HepG2 (cell line): ENCODE measurements at regions of chr11 and their contacts with region 1.

Region 1: GRCh38 chr11:66119348-66120133 is 49.5 kb downstream of the PACS1 start:
- DNase-seq: peak; percentile 95
- ATAC-seq: peak; percentile 93
- H3K4me3 ChIP-seq: peak overlapping the region; percentile 0 to 53 (median 29); a peak in 2 of 6 replicates
- H3K27ac ChIP-seq: peak overlapping the region; percentile 90
- H3K4me1 ChIP-seq: peaks cover 63% of the 10 kb centered on the region
- H3K27me3 ChIP-seq: no peaks in the 10 kb centered on the region
- CTCF ChIP-seq: no peak
- EP300 ChIP-seq: 0 out of 4 replicates have a peak, but pooled peaks of 1 of the 2 experiments have one; percentile 11
- POLR2A ChIP-seq: peak in 1 of 2 experiments; percentile 69; a peak in 2 of 4 replicates
- RAD21 ChIP-seq: no peak

Region 2: GRCh38 chr11:66051766-66052663 is 67.5 kb before region 1 on chr11 and contains the start of gene SF3B2:
- CTCF ChIA-PET with region 1: no interaction called
- POLR2A ChIA-PET with region 1: interaction called, 14 read pairs
- in situ Hi-C with region 1: no loop called
- intact Hi-C with region 1: no loop called
- DNase-seq: peak; percentile 95
- ATAC-seq: peak; percentile 96
- H3K4me3 ChIP-seq: peak within 1 kb of the TSS; percentile 83 to 93 (median 93)
- H3K27ac ChIP-seq: peak within 1 kb of the TSS; percentile 79
- H3K4me1 ChIP-seq: peaks cover 40% of the 10 kb centered on the region
- H3K27me3 ChIP-seq: peaks cover 0 to 23% of the 10 kb centered on the region in 2 experiments; a peak in 3 of 5 replicates
- CTCF ChIP-seq: peak; percentile 24; the same call in 1 of the 2 replicates
- EP300 ChIP-seq: no peak
- POLR2A ChIP-seq: peak; percentile 76 to 82
- RAD21 ChIP-seq: 0 out of 2 replicates have a peak, but pooled peaks have one; percentile 20
- total RNA-seq, gene SF3B2: 153 and 162 TPM in 2 replicates

Region 3: DNA sequence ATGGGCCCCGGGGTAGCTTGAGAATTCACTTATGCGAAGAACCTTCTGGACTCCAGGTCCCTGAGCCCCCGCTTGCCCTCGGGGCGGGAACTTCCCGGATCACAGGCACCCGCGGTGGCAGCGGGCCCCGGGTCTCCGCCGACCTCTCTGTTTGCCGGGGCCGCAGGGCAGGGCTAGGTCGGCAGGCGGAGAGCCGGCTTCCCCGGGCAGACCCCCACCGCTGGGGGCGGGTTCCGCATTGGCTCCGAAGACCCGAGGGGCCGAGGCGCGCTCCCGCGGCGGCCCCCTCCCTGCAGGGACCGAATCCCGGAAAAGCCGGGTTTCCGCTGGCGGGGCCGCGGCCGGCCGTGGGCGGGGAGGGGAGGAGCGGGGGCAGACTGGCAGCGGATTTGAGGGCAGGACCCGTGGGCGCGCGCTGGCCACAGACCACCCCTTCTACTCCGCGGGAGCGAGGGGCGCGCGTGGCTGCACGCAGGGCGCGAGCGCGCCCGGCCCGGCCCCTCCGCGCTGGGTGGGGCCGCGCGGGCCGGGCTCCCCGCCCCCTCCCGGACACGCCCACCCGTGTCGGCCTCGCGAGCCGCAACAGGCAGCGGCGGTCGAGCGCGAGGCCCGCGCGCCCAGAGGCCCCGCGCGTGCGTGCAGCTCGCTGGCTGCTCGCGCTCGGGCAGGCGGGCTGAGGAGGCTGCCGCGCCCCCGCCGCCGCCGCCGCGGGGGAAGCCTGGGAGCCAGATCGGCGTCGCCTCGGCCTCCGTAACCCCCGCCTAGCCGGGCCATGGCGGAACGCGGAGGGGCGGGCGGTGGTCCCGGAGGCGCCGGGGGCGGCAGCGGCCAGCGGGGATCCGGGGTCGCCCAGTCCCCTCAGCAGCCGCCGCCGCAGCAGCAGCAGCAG is 49.6 kb before region 1 on chr11 and contains the start of gene PACS1:
- CTCF ChIA-PET with region 1: no interaction called
- POLR2A ChIA-PET with region 1: interaction called, 5 read pairs
- in situ Hi-C with region 1: no loop called
- intact Hi-C with region 1: loop called (anchors 5 kb)
- DNase-seq: peak; percentile 25
- ATAC-seq: peak; percentile 48
- H3K4me3 ChIP-seq: peak within 1 kb of the TSS; percentile 82 to 88 (median 86)
- H3K27ac ChIP-seq: peak within 1 kb of the TSS; percentile 59
- H3K4me1 ChIP-seq: peaks cover 59% of the 10 kb centered on the region
- H3K27me3 ChIP-seq: no peaks in the 10 kb centered on the region
- CTCF ChIP-seq: no peak
- EP300 ChIP-seq: no peak
- POLR2A ChIP-seq: peak in 1 of 2 experiments; percentile 46; a peak in 1 of 4 replicates
- RAD21 ChIP-seq: no peak; the same call in none of the 2 replicates
- total RNA-seq, gene PACS1: 7.6 and 12.2 TPM in 2 replicates

Region 4: GRCh38 chr11:66087148-66087908 is 32.2 kb before region 1 on chr11:
- CTCF ChIA-PET with region 1: no interaction called
- POLR2A ChIA-PET with region 1: interaction called, 4 read pairs
- in situ Hi-C with region 1: no loop called
- intact Hi-C with region 1: loop called (anchors 1 kb)
- DNase-seq: no peak
- ATAC-seq: peak; percentile 79
- H3K4me3 ChIP-seq: no peak overlapping the region
- H3K27ac ChIP-seq: peak overlapping the region; percentile 47
- H3K4me1 ChIP-seq: peaks cover 46% of the 10 kb centered on the region
- H3K27me3 ChIP-seq: no peaks in the 10 kb centered on the region
- CTCF ChIP-seq: no peak
- EP300 ChIP-seq: no peak
- POLR2A ChIP-seq: no peak
- RAD21 ChIP-seq: no peak

Region 5: DNA sequence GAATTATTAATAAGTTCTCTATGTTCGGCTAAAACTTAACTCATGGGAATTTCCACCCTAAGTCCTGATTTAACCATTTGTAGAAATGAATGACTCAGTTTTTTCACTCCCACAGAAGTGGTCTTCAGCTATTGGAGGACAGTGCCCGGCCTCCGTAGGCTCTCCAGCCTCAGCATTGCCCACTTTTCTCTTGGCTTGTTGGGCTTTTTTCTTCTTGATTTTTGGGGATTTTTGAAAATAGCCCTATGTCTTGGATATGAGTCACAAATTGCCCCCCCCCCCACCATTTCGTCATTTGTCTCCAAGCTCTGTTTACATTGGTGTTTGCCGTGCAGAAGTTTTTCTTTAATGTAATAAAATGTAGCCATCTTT is 17.2 kb after region 1 on chr11:
- CTCF ChIA-PET with region 1: no interaction called
- POLR2A ChIA-PET with region 1: interaction called, 7 read pairs
- in situ Hi-C with region 1: no loop called
- intact Hi-C with region 1: loop called (anchors 1 kb)
- DNase-seq: peak; percentile 37
- ATAC-seq: no peak
- H3K4me3 ChIP-seq: no peak overlapping the region
- H3K27ac ChIP-seq: no peak overlapping the region
- H3K4me1 ChIP-seq: peaks cover 38% of the 10 kb centered on the region
- H3K27me3 ChIP-seq: no peaks in the 10 kb centered on the region
- CTCF ChIP-seq: no peak
- EP300 ChIP-seq: peak in 1 of 2 experiments; percentile 16; a peak in 1 of 4 replicates
- POLR2A ChIP-seq: no peak
- RAD21 ChIP-seq: no peak

Region 6: GRCh38 chr11:66150140-66150539 is 30.6 kb after region 1 on chr11:
- CTCF ChIA-PET with region 1: no interaction called
- POLR2A ChIA-PET with region 1: no interaction called
- in situ Hi-C with region 1: no loop called
- intact Hi-C with region 1: no loop called
- DNase-seq: no peak
- ATAC-seq: no peak
- H3K4me3 ChIP-seq: no peak overlapping the region
- H3K27ac ChIP-seq: no peak overlapping the region
- H3K4me1 ChIP-seq: peaks cover 40% of the 10 kb centered on the region
- H3K27me3 ChIP-seq: no peaks in the 10 kb centered on the region
- CTCF ChIP-seq: no peak
- EP300 ChIP-seq: no peak
- POLR2A ChIP-seq: no peak
- RAD21 ChIP-seq: no peak